ENCODE measurements at regions of chrX and their contacts with region 1.

Region 1: DNA sequence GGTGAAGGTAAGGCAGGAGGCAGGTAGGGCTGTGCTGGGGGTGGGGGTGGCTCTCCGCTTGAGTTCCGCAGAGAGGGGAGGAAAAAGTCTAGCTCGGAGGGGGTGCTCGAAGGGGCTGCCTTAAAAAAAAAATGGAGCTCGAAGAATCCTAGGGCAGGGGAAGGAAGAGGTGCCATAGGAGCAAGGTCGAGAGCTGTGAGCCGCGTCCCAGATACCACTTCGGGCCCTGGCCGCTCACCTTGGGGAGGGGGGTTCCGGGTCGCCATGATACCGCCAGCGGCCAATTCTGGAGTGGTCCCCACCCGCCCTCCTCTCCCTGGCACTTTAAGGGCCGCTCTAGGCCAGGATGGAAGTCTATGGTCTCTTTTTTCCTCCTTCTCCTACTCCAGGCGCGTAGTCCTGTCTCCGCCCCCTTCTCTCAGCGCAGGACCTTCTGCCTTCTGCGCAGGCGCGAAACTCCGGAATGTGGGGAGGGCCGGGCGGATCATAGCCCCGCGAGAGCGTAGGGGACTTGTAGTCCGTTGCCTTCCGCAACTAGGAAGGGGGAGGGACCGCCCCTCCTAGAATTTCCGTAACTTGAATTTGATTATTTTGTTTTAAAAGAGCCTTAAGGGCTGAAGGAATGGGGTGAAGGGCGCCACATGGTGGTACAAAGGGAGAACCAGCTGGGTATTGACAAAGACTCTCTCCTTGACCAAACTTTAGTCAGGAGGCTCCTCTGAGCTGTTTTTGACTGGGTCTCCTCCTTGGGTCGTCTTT is at the start of gene FUNDC1:
- DNase-seq: peak; percentile 73
- ATAC-seq: peak; percentile 98
- H3K4me3 Mint-ChIP-seq: peak within 1 kb of the TSS; percentile 93
- H3K27ac Mint-ChIP-seq: peak within 1 kb of the TSS; percentile 91
- H3K4me1 Mint-ChIP-seq: peaks cover 19% of the 10 kb centered on the region
- H3K27me3 Mint-ChIP-seq: no peaks in the 10 kb centered on the region
- CTCF ChIP-seq: no peak
- total RNA-seq, gene FUNDC1: 6.6 and 8.1 TPM in 2 replicates

Region 2: GRCh38 chrX:43654431-43655150 is 888.2 kb before region 1 on chrX:
- CTCF ChIA-PET with region 1: no interaction called
- POLR2A ChIA-PET with region 1: no interaction called
- intact Hi-C with region 1: loop called (anchors 10 kb)
- DNase-seq: peak; percentile 75
- ATAC-seq: peak; percentile 95
- H3K4me3 Mint-ChIP-seq: peak overlapping the region; percentile 93
- H3K27ac Mint-ChIP-seq: peak overlapping the region; percentile 97
- H3K4me1 Mint-ChIP-seq: peaks cover 11% of the 10 kb centered on the region
- H3K27me3 Mint-ChIP-seq: peaks cover 2% of the 10 kb centered on the region
- CTCF ChIP-seq: no peak

Region 3: GRCh38 chrX:44621078-44621477 is 78.3 kb after region 1 on chrX:
- CTCF ChIA-PET with region 1: no interaction called
- POLR2A ChIA-PET with region 1: no interaction called
- intact Hi-C with region 1: no loop called
- DNase-seq: no peak
- ATAC-seq: no peak
- H3K4me3 Mint-ChIP-seq: no peak overlapping the region
- H3K27ac Mint-ChIP-seq: no peak overlapping the region
- H3K4me1 Mint-ChIP-seq: no peaks in the 10 kb centered on the region
- H3K27me3 Mint-ChIP-seq: no peaks in the 10 kb centered on the region
- CTCF ChIP-seq: no peak

Region 4: GRCh38 chrX:44872817-44873414 is 330.2 kb after region 1 on chrX and contains the start of gene KDM6A:
- CTCF ChIA-PET with region 1: no interaction called
- POLR2A ChIA-PET with region 1: no interaction called
- intact Hi-C with region 1: loop called (anchors 2 kb)
- DNase-seq: peak; percentile 83
- ATAC-seq: peak; percentile 88
- H3K4me3 Mint-ChIP-seq: peak within 1 kb of the TSS; percentile 90
- H3K27ac Mint-ChIP-seq: peak within 1 kb of the TSS; percentile 88
- H3K4me1 Mint-ChIP-seq: peaks cover 25% of the 10 kb centered on the region
- H3K27me3 Mint-ChIP-seq: no peaks in the 10 kb centered on the region
- CTCF ChIP-seq: no peak
- total RNA-seq, gene KDM6A: 32.1 and 36.0 TPM in 2 replicates

Region 5: GRCh38 chrX:45070116-45071007 is 527.6 kb after region 1 on chrX:
- CTCF ChIA-PET with region 1: no interaction called
- POLR2A ChIA-PET with region 1: no interaction called
- intact Hi-C with region 1: loop called (anchors 5 kb)
- DNase-seq: no peak
- ATAC-seq: peak; percentile 40
- H3K4me3 Mint-ChIP-seq: no peak overlapping the region
- H3K27ac Mint-ChIP-seq: peak overlapping the region; percentile 37
- H3K4me1 Mint-ChIP-seq: peaks cover 38% of the 10 kb centered on the region
- H3K27me3 Mint-ChIP-seq: no peaks in the 10 kb centered on the region
- CTCF ChIP-seq: no peak

Region 6: DNA sequence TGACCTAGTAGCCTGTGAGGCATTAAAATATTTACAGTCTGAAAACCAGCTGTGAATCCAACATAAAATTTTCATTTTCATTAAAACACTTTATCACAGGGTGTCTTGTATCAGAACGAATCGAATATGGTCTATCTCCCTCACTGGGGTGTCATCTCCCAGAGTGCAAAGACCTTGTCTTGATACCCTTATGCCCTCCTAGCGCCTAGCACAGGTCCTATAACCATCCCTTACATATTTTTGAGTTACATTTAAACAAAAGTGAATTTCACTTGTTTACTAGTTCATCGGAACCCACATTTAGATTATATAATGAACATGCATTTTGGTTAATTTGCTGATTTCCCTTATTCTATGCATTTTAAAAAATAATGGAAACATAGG is 643.9 kb after region 1 on chrX:
- CTCF ChIA-PET with region 1: no interaction called
- POLR2A ChIA-PET with region 1: no interaction called
- intact Hi-C with region 1: loop called (anchors 10 kb)
- DNase-seq: no peak
- ATAC-seq: no peak
- H3K4me3 Mint-ChIP-seq: peak overlapping the region; percentile 83
- H3K27ac Mint-ChIP-seq: no peak overlapping the region
- H3K4me1 Mint-ChIP-seq: peaks cover 17% of the 10 kb centered on the region
- H3K27me3 Mint-ChIP-seq: no peaks in the 10 kb centered on the region
- CTCF ChIP-seq: peak; percentile 21

Measured in activated B cell treated with CpG ODN at 0.5 μM for 24 hours (primary cell).